K562 (cell line): ENCODE measurements at regions of chr14 and their contacts with region 1.

Region 1: DNA sequence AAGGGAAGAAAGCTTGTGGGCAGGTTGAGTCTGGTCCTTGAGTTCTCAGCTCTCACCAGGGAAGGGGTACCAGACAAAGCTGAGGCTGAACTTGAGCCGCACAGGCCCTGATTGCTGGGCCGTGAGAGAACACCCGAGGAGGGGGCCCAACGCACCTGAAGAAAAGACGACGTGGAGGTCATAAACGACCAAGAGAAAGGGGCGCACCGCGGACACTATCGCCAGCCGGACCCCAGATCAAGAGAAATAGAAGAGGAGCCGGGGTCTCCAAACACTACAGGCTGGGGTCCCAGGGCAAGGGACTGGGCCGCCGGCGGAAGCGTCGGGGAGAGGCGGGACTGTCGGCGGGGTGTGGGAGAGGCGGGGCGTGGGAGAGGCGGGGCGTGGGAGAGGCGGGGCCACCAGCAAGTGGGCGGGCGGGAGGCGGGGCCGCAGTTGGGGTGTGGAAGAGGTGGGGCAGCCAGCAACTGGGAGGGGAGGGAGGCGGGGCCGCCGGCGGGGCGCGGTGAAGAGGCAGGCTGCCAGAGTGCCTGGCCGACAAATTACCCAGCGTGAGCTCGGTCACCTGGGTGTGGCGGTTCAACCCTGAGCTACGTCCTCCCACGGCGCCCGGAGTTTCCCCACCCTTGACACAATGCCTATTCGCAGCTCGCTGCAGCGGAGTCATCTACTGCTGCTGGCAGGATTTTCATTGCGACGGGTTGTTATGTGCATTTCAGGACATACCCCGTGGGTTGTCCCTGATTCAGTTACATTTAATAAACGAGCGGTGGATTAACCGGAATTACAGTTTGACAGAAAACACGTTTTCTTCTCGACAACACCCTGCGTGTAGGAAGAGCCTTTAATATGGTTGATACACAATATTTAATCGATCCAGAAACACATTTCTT is 15.5 kb upstream of the NEMF start:
- DNase-seq: peak; percentile 90 to 95 (median 90)
- ATAC-seq: peak; percentile 92
- H3K4me3 ChIP-seq: peak overlapping the region; percentile 57
- H3K27ac ChIP-seq: peak overlapping the region; percentile 68
- H3K4me1 ChIP-seq: peaks cover 10 to 14% of the 10 kb centered on the region in 2 experiments; a peak in 4 of 5 replicates
- H3K27me3 ChIP-seq: no peaks in the 10 kb centered on the region
- CTCF ChIP-seq: no peak
- EP300 ChIP-seq: peak; percentile 44
- POLR2A ChIP-seq: peak; percentile 70
- RAD21 ChIP-seq: no peak

Region 2: GRCh38 chr14:49971156-49972130 is 103.4 kb after region 1 on chr14:
- CTCF ChIA-PET with region 1: no interaction called
- POLR2A ChIA-PET with region 1: interaction called, 3 read pairs
- in situ Hi-C with region 1: no loop called
- intact Hi-C with region 1: loop called (anchors 10 kb)
- DNase-seq: peak in 1 of 4 experiments; percentile 23
- ATAC-seq: peak; percentile 15
- H3K4me3 ChIP-seq: no peak overlapping the region
- H3K27ac ChIP-seq: peak overlapping the region; percentile 90; the same call in 1 of the 3 replicates
- H3K4me1 ChIP-seq: peaks cover 0 to 32% of the 10 kb centered on the region in 2 experiments; a peak in 4 of 5 replicates
- H3K27me3 ChIP-seq: no peaks in the 10 kb centered on the region
- CTCF ChIP-seq: no peak
- EP300 ChIP-seq: no peak
- POLR2A ChIP-seq: no peak
- RAD21 ChIP-seq: no peak; a peak in 1 of 4 replicates

Region 3: GRCh38 chr14:50047274-50047676 is 179.2 kb after region 1 on chr14:
- CTCF ChIA-PET with region 1: no interaction called
- POLR2A ChIA-PET with region 1: no interaction called
- in situ Hi-C with region 1: no loop called
- intact Hi-C with region 1: no loop called
- DNase-seq: no peak
- ATAC-seq: peak; percentile 46; the same call in 2 of the 3 replicates
- H3K4me3 ChIP-seq: no peak overlapping the region
- H3K27ac ChIP-seq: no peak overlapping the region
- H3K4me1 ChIP-seq: peaks cover 4 to 15% of the 10 kb centered on the region in 2 experiments
- H3K27me3 ChIP-seq: no peaks in the 10 kb centered on the region
- CTCF ChIP-seq: no peak
- EP300 ChIP-seq: no peak
- POLR2A ChIP-seq: no peak
- RAD21 ChIP-seq: no peak

Region 4: GRCh38 chr14:50109342-50109741 is 241.3 kb after region 1 on chr14:
- CTCF ChIA-PET with region 1: interaction called, 17 read pairs
- POLR2A ChIA-PET with region 1: interaction called, 12 read pairs
- in situ Hi-C with region 1: loop called (anchors 5 kb)
- intact Hi-C with region 1: loop called (anchors 1 kb)
- DNase-seq: no peak
- ATAC-seq: no peak
- H3K4me3 ChIP-seq: no peak overlapping the region
- H3K27ac ChIP-seq: no peak overlapping the region
- H3K4me1 ChIP-seq: no peaks in the 10 kb centered on the region
- H3K27me3 ChIP-seq: no peaks in the 10 kb centered on the region
- CTCF ChIP-seq: no peak
- EP300 ChIP-seq: no peak
- POLR2A ChIP-seq: no peak
- RAD21 ChIP-seq: no peak

Region 5: DNA sequence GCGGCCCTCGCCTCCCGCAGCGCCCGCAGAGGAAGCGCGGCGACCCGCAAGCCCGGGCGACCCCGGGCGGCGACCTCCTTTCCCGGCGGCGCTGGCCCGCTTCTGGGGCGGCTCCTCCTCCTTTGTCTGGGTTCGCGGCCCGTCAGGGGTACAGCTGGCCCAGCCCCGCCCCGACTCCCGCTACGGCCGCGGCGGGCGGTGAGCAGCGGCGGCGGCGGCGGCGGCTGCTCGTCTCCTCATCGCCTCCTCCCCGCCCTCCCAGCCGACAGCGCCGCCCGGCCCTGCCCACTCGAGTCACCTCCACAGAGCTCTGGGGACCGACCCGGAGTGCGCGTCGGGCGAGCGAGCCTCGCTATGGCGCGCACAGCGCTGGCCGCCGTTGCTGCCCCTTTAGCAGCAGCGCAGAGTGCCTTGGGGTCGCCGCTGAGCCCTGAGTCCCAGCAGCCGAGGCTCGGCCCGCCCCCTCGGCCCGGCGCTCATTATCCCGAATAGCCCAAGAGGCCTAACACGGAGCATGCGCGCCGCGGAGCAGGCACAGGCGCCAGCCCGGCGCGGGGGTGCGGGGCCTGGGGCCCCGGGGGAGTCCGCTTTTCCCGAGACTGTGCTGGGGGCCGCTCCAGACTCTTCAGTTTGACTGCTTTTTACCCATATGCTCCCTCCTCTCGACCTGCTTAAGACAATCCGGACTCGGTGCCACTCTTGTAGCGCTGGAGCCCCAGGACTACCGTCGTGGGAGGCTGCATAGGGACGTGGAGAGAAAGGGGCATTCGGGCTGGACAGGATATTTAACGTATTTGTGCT is 363.6 kb after region 1 on chr14 and contains the start of gene SOS2:
- CTCF ChIA-PET with region 1: no interaction called
- POLR2A ChIA-PET with region 1: interaction called, 3 read pairs
- in situ Hi-C with region 1: no loop called
- intact Hi-C with region 1: loop called (anchors 10 kb)
- DNase-seq: peak; percentile 76 to 88 (median 80)
- ATAC-seq: peak; percentile 93
- H3K4me3 ChIP-seq: peak within 1 kb of the TSS; percentile 83
- H3K27ac ChIP-seq: peak within 1 kb of the TSS; percentile 75
- H3K4me1 ChIP-seq: peaks cover 6 to 11% of the 10 kb centered on the region in 2 experiments; a peak in 4 of 5 replicates
- H3K27me3 ChIP-seq: no peaks in the 10 kb centered on the region
- CTCF ChIP-seq: no peak
- EP300 ChIP-seq: no peak
- POLR2A ChIP-seq: peak; percentile 69
- RAD21 ChIP-seq: no peak
- polyA plus RNA-seq, gene SOS2: 2.2 to 3.0 TPM